Activated CD4-positive, alpha-beta memory T cell treated with anti-CD3 and anti-CD28 coated beads, Interleukin-2, amount 10 ng/mL, durations not matched to agents 7 days and 5 days (primary cell): ENCODE measurements at regions of chr22 and their contacts with region 1.

Region 1: GRCh38 chr22:31676700-31677099 is 14.7 kb upstream of the PISD start:
- DNase-seq: peak; percentile 95
- H3K4me3 Mint-ChIP-seq: peak overlapping the region; percentile 88
- H3K27ac Mint-ChIP-seq: peak overlapping the region; percentile 89
- H3K4me1 Mint-ChIP-seq: peaks cover 24% of the 10 kb centered on the region
- H3K27me3 Mint-ChIP-seq: no peaks in the 10 kb centered on the region

Region 2: GRCh38 chr22:31692186-31692886 is 15.6 kb after region 1 on chr22:
- CTCF ChIA-PET with region 1: interaction called, 5 read pairs
- POLR2A ChIA-PET with region 1: interaction called, 16 read pairs
- DNase-seq: no peak
- H3K4me3 Mint-ChIP-seq: no peak overlapping the region
- H3K27ac Mint-ChIP-seq: peak overlapping the region; percentile 93
- H3K4me1 Mint-ChIP-seq: peaks cover 44% of the 10 kb centered on the region
- H3K27me3 Mint-ChIP-seq: no peaks in the 10 kb centered on the region